ENCODE measurements at regions of chr2 and their contacts with region 1.

Region 1: GRCh38 chr2:128090945-128091725 is at the start of gene UGGT1:
- DNase-seq: peak; percentile 93 to 96 (median 96)
- ATAC-seq: peak; percentile 99 to 100 (median 100)
- H3K4me3 ChIP-seq: peak within 1 kb of the TSS; percentile 73 to 100 (median 90)
- H3K27ac ChIP-seq: peak within 1 kb of the TSS; percentile 51 to 92 (median 86)
- H3K4me1 ChIP-seq: peaks cover 0 to 26% (median 13%) of the 10 kb centered on the region in 12 donors
- H3K27me3 ChIP-seq: no peaks in the 10 kb centered on the region
- CTCF ChIP-seq: peak in 1 of 12 donors; percentile 5
- POLR2A ChIP-seq: peak in 1 of 2 donors; percentile 78
- total RNA-seq, gene UGGT1: 24.0 to 77.4 (median 33.3) TPM

Region 2: GRCh38 chr2:127277028-127277427 is 814.1 kb before region 1 on chr2:
- intact Hi-C with region 1: no loop called
- DNase-seq: no peak
- ATAC-seq: no peak
- H3K4me3 ChIP-seq: no peak overlapping the region
- H3K27ac ChIP-seq: no peak overlapping the region
- H3K4me1 ChIP-seq: peaks cover 0 to 15% (median 0%) of the 10 kb centered on the region in 12 donors
- H3K27me3 ChIP-seq: no peaks in the 10 kb centered on the region
- CTCF ChIP-seq: no peak
- POLR2A ChIP-seq: no peak

Region 3: GRCh38 chr2:127884436-127885345 is 206.4 kb before region 1 on chr2:
- intact Hi-C with region 1: loop called in 5 of 10 experiments (anchors 2 to 10 kb)
- DNase-seq: no peak
- ATAC-seq: no peak
- H3K4me3 ChIP-seq: peak overlapping the region; percentile 45 to 90 (median 72)
- H3K27ac ChIP-seq: peak overlapping the region; percentile 41 to 94 (median 92)
- H3K4me1 ChIP-seq: peaks cover 0 to 58% (median 48%) of the 10 kb centered on the region in 12 donors
- H3K27me3 ChIP-seq: no peaks in the 10 kb centered on the region
- CTCF ChIP-seq: peak in 1 of 12 donors; percentile 4
- POLR2A ChIP-seq: no peak

Region 4: GRCh38 chr2:128037649-128038048 is 53.5 kb before region 1 on chr2:
- intact Hi-C with region 1: loop called in 1 of 10 experiments (anchors 10 kb)
- DNase-seq: no peak
- ATAC-seq: no peak
- H3K4me3 ChIP-seq: no peak overlapping the region
- H3K27ac ChIP-seq: no peak overlapping the region
- H3K4me1 ChIP-seq: no peaks in the 10 kb centered on the region
- H3K27me3 ChIP-seq: peaks cover 0 to 10% (median 0%) of the 10 kb centered on the region in 9 donors
- CTCF ChIP-seq: no peak
- POLR2A ChIP-seq: no peak

Region 5: DNA sequence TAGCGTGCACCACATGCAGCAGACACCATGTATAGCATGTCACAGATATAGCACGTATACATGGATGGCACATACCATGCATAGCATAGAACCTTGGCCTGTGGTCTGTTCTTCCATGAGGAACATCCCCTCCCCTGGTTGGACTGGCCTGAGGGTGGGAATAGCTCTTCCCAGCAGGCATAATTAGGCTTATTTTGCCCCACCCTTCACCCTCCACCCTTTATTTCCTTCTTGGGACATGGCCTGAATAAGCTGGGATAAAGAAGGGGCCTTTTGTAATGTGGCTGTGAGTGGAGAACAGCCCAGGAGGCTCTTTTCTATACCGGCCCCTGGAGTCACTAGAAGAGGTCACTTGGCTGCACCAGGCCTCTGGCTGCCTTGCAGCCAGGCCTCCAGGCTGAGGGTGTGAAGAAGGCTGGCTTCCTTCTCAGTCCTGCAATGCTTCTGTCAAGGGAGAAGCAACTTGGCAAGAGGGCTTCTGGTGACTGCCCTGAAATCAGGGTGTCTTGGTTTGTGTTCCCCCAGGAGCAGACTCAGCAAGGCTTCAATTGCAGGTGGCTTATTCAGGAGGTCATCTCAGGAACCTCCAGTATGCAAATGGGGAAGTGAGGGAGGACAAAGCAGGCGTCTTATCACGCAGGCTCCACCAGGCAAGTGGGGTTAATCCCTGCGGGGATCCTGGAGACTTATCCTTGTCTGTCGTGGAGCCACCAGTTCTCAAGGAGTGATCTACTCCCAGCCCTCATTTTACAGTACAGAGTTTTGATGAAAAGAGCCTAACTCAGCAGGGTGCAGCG is 159.3 kb after region 1 on chr2:
- intact Hi-C with region 1: no loop called
- DNase-seq: no peak
- ATAC-seq: peak in 1 of 4 donors; percentile 20
- H3K4me3 ChIP-seq: no peak overlapping the region
- H3K27ac ChIP-seq: no peak overlapping the region
- H3K4me1 ChIP-seq: no peaks in the 10 kb centered on the region
- H3K27me3 ChIP-seq: no peaks in the 10 kb centered on the region
- CTCF ChIP-seq: no peak
- POLR2A ChIP-seq: no peak

Measured in heart left ventricle (tissue), 16 donors.